Posterior vena cava (tissue), 2 donors: ENCODE measurements at regions of chr6 and their contacts with region 1.

Region 1: GRCh38 chr6:169070506-169071176 is 183.0 kb downstream of the THBS2 start:
- DNase-seq: peak; percentile 95

Region 2: GRCh38 chr6:167760979-167761793 is 1309.5 kb before region 1 on chr6:
- intact Hi-C with region 1: loop called in 1 of 2 experiments (anchors 5 kb)
- DNase-seq: peak; percentile 85

Region 3: DNA sequence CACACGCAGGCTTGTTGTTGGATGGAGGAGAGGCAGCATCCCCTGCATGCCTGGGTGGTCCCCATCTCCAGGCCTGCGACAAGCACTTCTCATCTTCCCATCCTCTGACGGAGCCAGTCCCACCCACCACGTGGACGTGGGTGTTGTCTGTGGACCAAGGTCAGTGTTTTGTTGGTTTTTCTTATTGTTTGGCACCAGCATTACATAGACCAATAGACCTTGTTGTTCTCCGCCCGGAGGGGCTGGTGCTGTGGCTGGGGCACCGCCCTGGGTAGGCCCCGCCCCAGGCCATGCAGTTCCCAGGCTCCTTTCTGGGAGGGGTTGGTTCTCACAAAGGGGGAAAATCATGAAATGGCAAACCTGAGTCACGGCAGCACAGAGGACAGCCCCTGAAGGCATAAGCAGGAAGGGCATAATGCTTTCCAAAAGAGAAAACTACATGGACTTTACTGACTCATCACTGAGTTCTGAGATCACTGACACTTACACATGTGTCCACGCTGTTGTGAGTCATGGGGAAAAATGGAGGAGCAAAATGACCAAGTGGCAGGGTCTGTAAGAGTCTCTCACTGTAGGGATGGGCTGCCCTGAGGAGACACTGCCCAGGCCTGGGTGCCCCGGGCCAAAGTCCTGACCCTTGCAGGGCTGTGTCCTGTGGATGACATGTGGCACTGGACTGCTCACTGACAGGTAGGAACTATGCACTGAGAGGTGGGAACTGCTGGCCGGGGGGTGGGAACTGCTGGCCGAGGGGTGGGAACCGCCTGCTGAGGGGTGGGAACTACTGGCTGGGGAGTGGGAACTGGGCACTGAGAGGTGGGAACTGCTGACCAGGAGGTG is 92.3 kb after region 1 on chr6:
- intact Hi-C with region 1: no loop called
- DNase-seq: peak; percentile 94

Region 4: GRCh38 chr6:169326067-169326799 is 255.6 kb after region 1 on chr6:
- intact Hi-C with region 1: loop called in 1 of 2 experiments (anchors 10 kb)
- DNase-seq: peak; percentile 79